ENCODE measurements at regions of chr3 and their contacts with region 1.

Region 1: DNA sequence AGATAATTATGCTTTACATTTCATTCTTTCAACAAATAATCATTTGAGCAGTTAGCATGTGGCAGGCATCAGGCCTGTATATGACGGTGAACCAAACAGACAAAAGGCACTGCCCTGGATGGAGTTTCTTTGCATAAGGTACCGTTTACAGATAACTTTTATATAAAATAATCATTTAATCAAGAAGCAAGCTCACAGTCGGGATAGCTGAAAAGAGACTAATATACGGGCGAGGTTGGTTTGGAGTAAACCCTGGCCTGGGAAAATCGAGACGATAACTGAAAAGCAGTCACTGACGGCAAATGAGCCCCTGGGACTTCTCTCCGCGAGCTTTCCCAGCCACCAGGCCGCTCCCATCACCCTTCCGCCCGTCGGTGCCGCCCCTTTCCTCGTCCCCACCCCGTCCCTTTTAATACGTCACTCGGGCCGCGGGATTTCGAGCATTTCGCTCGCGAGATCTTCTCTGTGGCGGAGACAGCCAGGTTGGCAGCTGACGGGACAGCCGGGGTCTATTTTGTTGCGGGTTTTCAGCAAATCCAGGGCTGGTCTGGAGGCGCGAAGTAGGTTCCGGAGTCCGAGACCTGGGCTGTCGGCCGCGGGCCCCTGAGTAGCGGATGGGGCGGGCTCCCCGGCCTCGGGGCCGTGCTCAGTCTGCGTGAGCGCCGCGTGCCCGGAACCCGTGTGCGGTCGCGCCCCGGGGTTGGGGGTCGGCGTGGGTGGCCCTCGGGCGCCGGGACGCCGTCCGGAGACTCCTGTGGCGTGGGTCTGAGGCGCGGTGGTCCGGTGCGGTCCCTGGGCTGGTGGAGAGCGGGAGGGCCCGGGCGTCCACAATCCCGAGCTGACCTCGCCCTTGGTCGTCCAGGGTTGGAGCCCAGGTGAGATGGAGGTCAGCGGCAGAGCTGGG is at the start of gene NMD3:
- DNase-seq: peak; percentile 98
- H3K4me3 Mint-ChIP-seq: peak within 1 kb of the TSS; percentile 93
- H3K27ac Mint-ChIP-seq: peak within 1 kb of the TSS; percentile 91
- H3K4me1 Mint-ChIP-seq: peaks cover 23% of the 10 kb centered on the region
- H3K27me3 Mint-ChIP-seq: peaks cover 9% of the 10 kb centered on the region
- total RNA-seq, gene NMD3: 78.2 and 81.8 TPM in 2 replicates

Region 2: DNA sequence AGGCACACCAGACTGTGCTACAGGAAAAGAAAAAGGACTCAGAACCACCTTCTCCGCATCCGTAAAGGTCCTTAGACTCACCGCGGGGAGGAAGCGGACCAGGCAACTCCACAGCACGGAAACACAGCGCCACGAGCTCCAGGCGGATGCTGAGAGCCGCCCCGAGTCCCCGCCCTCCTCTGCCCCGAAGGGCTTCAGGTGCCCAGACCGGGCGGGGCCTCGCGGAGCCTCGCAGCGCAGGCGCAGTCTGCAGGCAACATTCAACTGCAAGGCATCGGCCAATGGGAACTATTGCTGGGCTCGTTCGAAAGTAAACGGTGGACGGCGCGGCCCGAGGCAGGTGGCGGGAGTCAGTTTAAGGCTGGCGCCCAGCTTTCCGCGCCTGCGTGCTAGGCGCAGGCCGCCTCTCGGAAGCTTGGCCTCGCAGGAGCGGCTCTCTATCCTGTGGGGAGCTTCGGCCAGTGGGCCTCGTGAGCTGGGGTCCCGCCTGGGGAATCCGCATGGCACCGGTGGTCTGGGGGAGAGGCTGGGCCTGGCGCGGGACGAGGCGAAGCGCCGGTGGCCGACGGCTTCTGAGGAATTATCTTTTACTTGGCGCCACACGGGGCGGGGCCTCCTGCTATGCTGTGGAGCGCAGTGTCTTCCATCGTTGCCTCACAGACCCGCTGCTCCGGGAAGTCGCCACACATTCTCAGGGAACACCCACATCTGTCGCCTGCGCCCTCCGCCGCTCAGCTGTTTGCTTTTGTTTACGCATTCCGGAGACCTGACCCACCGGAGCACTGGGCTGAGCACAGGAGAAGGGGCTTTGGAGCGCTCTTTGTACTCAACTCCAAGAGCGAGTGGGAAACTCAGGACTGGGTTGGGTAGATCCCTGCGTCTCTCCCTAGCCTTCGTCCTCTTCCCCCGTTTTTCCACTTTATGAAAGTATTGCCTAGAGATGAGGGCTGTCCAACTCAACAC is 771.2 kb before region 1 on chr3 and contains the start of gene TRIM59:
- intact Hi-C with region 1: loop called (anchors 2 kb)
- DNase-seq: peak; percentile 99
- H3K4me3 Mint-ChIP-seq: peak within 1 kb of the TSS; percentile 99
- H3K27ac Mint-ChIP-seq: peak within 1 kb of the TSS; percentile 100
- H3K4me1 Mint-ChIP-seq: peaks cover 29% of the 10 kb centered on the region
- H3K27me3 Mint-ChIP-seq: no peaks in the 10 kb centered on the region
- total RNA-seq, gene TRIM59: 31.8 and 35.0 TPM in 2 replicates

Region 3: DNA sequence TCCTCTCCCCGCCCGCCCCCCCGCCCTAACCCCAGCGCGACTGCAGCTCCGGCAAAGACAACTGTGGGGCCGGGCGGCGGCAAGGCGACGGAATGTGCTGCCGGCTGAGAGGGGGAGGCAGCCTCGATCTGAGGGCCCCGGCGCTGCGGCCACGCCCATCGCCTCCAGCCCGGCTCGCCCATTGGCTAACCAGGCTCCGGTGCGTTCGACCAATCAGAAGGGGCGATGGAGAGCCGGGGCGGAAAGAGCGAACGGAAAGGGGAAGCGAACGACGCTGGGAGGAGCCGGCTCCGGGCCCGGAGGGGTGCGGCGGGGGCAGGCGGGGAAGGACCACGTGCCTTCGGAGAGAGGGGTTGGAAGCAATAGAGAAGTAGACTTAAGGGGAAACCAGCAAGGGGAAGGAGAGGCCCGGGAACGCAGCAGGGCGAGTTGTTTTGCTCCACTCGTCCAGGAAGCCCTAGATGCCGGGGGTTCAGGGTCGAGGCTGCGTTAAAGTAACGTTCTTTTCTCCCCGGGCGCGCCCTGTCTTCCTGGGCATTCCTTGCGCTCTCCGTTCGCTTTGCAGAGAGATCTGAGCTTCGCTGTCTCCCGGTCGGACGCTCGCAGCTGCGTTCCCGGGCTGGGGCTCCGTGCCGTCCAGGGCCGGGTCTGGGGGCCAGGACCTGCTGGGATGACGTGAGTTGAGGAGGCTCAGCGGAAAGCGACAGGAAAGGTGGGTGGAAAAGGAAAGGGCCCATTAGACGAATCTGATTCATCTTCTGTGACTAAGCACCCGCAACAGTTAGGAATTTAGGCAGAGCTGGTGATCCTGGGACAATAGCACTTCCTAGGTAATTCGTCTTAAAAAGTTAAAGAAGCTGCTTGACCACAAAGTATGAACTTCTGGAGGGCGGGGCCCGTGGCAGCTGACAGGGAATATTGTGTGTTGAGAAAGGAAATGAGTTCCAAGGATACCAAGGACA is 655.4 kb before region 1 on chr3 and contains the start of gene KPNA4:
- intact Hi-C with region 1: loop called (anchors 1 kb)
- DNase-seq: peak; percentile 99
- H3K4me3 Mint-ChIP-seq: peak within 1 kb of the TSS; percentile 100
- H3K27ac Mint-ChIP-seq: peak within 1 kb of the TSS; percentile 100
- H3K4me1 Mint-ChIP-seq: peaks cover 52% of the 10 kb centered on the region
- H3K27me3 Mint-ChIP-seq: no peaks in the 10 kb centered on the region
- total RNA-seq, gene KPNA4: 72.5 and 75.9 TPM in 2 replicates

Region 4: GRCh38 chr3:160956806-160957205 is 264.3 kb before region 1 on chr3:
- intact Hi-C with region 1: loop called (anchors 10 kb)
- DNase-seq: no peak
- H3K4me3 Mint-ChIP-seq: no peak overlapping the region
- H3K27ac Mint-ChIP-seq: no peak overlapping the region
- H3K4me1 Mint-ChIP-seq: no peaks in the 10 kb centered on the region
- H3K27me3 Mint-ChIP-seq: peaks cover 5% of the 10 kb centered on the region

Region 5: GRCh38 chr3:161081633-161082032 is 139.5 kb before region 1 on chr3:
- intact Hi-C with region 1: loop called (anchors 5 kb)
- DNase-seq: peak; percentile 62
- H3K4me3 Mint-ChIP-seq: no peak overlapping the region
- H3K27ac Mint-ChIP-seq: no peak overlapping the region
- H3K4me1 Mint-ChIP-seq: peaks cover 32% of the 10 kb centered on the region
- H3K27me3 Mint-ChIP-seq: peaks cover 5% of the 10 kb centered on the region